ENCODE measurements at regions of chr14 and their contacts with region 1.

Region 1: GRCh38 chr14:23984891-23985602 is 3.7 kb upstream of the DHRS4L2 start:
- DNase-seq: no peak
- ATAC-seq: no peak
- H3K4me3 ChIP-seq: no peak overlapping the region
- H3K4me3 Mint-ChIP-seq: no peak overlapping the region
- H3K27ac ChIP-seq: no peak overlapping the region
- H3K27ac Mint-ChIP-seq: no peak overlapping the region
- H3K4me1 ChIP-seq: peaks cover 4% of the 10 kb centered on the region
- H3K4me1 Mint-ChIP-seq: peaks cover 18% of the 10 kb centered on the region
- H3K27me3 ChIP-seq: no peaks in the 10 kb centered on the region
- H3K27me3 Mint-ChIP-seq: no peaks in the 10 kb centered on the region
- CTCF ChIP-seq: no peak

Region 2: GRCh38 chr14:24036169-24036962 is 51.3 kb after region 1 on chr14:
- CTCF ChIA-PET with region 1: no interaction called
- POLR2A ChIA-PET with region 1: no interaction called
- intact Hi-C with region 1: loop called in 1 of 2 experiments (anchors 5 kb)
- DNase-seq: peak; percentile 29 to 79 (median 69)
- ATAC-seq: peak; percentile 79
- H3K4me3 ChIP-seq: peak overlapping the region; percentile 69 to 87
- H3K4me3 Mint-ChIP-seq: peak overlapping the region; percentile 89
- H3K27ac ChIP-seq: peak overlapping the region; percentile 40 to 66
- H3K27ac Mint-ChIP-seq: peak overlapping the region; percentile 83
- H3K4me1 ChIP-seq: no peaks in the 10 kb centered on the region
- H3K4me1 Mint-ChIP-seq: peaks cover 9% of the 10 kb centered on the region
- H3K27me3 ChIP-seq: no peaks in the 10 kb centered on the region
- H3K27me3 Mint-ChIP-seq: no peaks in the 10 kb centered on the region
- CTCF ChIP-seq: peak; percentile 64